Activated CD4-positive, alpha-beta memory T cell treated with anti-CD3 and anti-CD28 coated beads, Interleukin-2, amount 10 ng/mL, durations not matched to agents 7 days and 5 days (primary cell): ENCODE measurements at regions of chr1 and their contacts with region 1.

Region 1: DNA sequence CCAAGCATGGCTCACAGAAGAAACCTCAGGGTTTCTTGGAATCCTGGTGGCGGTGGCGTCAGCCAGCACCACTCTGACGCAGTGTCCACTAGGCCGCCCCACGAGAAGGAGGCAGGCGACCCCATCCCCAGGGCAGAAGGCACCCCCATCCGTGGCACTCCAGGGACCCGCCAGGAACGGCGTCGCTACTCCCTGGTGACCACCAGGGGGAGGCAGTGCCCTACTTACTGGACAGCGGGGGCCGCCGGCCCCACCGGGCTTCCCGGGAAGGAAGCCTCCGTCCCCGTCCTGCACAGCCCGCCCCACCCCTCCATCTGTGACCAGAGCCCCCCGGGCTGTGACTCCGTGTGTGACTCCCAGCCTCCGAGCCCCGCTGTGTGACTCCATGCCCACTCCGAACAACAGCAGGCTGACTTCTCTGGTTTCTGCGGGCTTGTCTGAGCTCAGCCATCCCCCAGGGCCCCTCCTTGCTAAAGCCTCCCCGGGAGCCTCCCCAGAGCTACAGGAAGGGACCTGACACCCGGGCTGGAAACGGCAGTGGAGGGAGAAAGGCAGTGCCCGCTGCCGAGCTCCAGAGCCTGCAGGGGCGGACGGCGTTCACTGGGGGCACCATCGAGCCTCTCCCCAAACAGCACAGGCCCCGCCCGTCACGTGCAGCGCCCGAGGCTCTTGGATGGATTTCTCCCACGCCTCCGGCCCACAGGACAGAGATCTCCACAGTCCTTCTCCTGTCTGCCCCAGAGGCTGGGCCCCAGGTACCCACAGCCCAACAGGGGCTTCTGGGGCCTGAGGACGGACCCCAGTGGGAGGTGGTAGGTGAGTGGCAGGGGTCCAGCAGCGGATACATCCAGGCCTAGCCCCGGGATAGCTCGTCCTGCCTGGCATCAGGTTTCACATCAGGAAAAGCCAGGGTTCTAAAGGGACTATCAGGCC is 21.1 kb downstream of the KIF17 start:
- DNase-seq: peak; percentile 77
- H3K4me3 Mint-ChIP-seq: peak overlapping the region; percentile 79
- H3K27ac Mint-ChIP-seq: no peak overlapping the region
- H3K4me1 Mint-ChIP-seq: peaks cover 12% of the 10 kb centered on the region
- H3K27me3 Mint-ChIP-seq: peaks cover 9% of the 10 kb centered on the region

Region 2: GRCh38 chr1:20706841-20707240 is 10.2 kb after region 1 on chr1:
- CTCF ChIA-PET with region 1: interaction called, 10 read pairs
- POLR2A ChIA-PET with region 1: no interaction called
- DNase-seq: no peak
- H3K4me3 Mint-ChIP-seq: no peak overlapping the region
- H3K27ac Mint-ChIP-seq: no peak overlapping the region
- H3K4me1 Mint-ChIP-seq: no peaks in the 10 kb centered on the region
- H3K27me3 Mint-ChIP-seq: peaks cover 5% of the 10 kb centered on the region